ENCODE measurements at regions of chr2 and their contacts with region 1.

Region 1: GRCh38 chr2:219029829-219030165 is 11.5 kb downstream of the CFAP65 start:
- DNase-seq: peak; percentile 87
- H3K4me3 ChIP-seq: no peak overlapping the region
- H3K27ac ChIP-seq: no peak overlapping the region
- H3K4me1 ChIP-seq: no peaks in the 10 kb centered on the region
- H3K27me3 ChIP-seq: peaks cover 15% of the 10 kb centered on the region
- CTCF ChIP-seq: peak; percentile 88 to 98 (median 95)
- EP300 ChIP-seq: no peak
- POLR2A ChIP-seq: no peak

Region 2: DNA sequence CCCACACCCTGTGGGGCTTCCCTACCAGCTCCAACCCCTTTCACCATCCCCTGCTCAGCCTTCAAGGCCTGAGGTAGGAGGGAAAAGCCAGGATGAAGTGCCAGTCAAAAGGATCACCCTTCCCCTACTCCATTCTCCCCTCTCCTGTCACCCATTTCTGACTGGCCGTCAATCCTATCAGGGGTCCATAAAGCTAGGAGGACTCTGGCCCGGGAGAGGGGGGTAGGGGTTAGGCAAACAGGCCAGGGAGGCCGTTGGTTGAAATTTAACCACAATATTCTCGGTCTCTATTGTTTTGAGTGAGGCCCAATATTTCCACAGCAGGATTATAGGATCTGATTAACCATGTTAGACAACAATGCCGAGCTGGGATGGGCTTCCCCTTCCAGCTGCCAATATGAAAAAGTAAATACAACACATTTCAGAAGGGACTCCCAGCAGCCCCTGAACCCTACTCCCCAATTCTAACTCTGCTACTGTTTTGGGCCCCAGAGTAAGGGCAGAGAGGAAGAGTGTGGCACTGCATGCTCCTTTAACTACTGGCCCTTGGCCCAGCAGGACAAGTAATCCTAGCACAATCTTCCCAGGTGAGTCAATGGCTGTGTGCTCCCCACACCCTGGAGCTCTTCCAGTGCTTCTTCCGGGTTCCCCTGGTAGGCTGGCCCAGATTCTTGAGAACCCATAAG is 41.5 kb after region 1 on chr2:
- in situ Hi-C with region 1: no loop called
- intact Hi-C with region 1: no loop called
- DNase-seq: peak; percentile 63
- H3K4me3 ChIP-seq: no peak overlapping the region
- H3K27ac ChIP-seq: peak overlapping the region; percentile 64 to 78 (median 70)
- H3K4me1 ChIP-seq: peaks cover 4 to 33% (median 18%) of the 10 kb centered on the region in 4 donors
- H3K27me3 ChIP-seq: no peaks in the 10 kb centered on the region
- CTCF ChIP-seq: no peak
- EP300 ChIP-seq: no peak
- POLR2A ChIP-seq: no peak

Region 3: GRCh38 chr2:219155054-219155644 is 125.4 kb after region 1 on chr2:
- in situ Hi-C with region 1: loop called in 1 of 4 experiments (anchors 10 kb)
- intact Hi-C with region 1: no loop called
- DNase-seq: peak; percentile 25
- H3K4me3 ChIP-seq: no peak overlapping the region
- H3K27ac ChIP-seq: no peak overlapping the region
- H3K4me1 ChIP-seq: peaks cover 4 to 6% (median 4%) of the 10 kb centered on the region in 4 donors
- H3K27me3 ChIP-seq: no peaks in the 10 kb centered on the region
- CTCF ChIP-seq: peak; percentile 56 to 88 (median 64)
- EP300 ChIP-seq: no peak
- POLR2A ChIP-seq: no peak

Region 4: DNA sequence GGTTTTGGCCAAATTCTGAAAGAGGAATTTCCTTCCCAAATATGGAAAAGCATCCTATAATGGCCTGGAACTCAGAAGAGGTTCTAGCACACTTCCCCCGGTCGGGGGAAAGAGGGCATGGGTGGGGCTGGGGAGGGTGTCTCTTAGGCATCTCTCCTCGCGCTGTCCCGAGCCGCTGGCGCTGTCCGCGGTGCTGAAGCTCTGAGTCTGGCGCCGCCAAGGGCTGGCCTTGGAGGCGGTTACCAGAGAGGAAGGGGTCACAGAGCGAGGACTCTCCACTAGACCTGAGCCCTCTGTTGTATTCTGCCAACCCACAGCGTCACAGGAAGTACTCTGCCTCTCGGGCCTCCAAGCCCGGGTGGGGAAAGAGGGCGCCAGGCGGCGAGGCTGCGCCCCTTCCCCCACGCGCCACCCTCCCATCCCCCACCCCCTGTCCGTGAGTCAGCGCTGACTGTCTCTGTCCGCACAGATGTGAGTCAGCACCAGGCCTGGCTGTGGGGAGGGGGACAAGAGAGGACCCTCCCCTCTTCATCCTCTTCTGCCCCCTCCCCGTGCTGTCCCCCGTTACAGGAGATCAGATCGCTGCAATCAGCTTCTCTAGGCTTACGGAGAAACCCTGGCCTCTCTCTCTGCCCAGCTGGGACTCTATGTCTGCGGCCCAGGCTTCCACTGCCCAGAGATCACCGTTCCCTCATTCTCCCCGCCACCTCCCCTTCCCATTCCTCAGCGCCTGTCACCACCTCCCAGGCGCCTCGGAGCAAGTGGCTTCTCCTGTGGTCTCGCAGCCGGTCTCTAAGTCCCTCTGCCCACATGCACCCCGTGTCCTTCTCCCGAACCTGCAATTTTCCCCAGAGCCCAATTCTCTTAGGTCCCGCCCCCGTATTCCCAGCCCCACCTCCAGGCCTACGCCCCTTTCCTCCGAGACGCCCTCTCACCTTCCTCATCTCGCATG is 278.6 kb after region 1 on chr2:
- in situ Hi-C with region 1: loop called in 2 of 4 experiments (anchors 25 kb)
- intact Hi-C with region 1: no loop called
- DNase-seq: peak; percentile 53
- H3K4me3 ChIP-seq: no peak overlapping the region
- H3K27ac ChIP-seq: no peak overlapping the region
- H3K4me1 ChIP-seq: peaks cover 0 to 6% (median 0%) of the 10 kb centered on the region in 4 donors
- H3K27me3 ChIP-seq: peaks cover 71% of the 10 kb centered on the region
- CTCF ChIP-seq: no peak
- EP300 ChIP-seq: no peak
- POLR2A ChIP-seq: no peak

Region 5: DNA sequence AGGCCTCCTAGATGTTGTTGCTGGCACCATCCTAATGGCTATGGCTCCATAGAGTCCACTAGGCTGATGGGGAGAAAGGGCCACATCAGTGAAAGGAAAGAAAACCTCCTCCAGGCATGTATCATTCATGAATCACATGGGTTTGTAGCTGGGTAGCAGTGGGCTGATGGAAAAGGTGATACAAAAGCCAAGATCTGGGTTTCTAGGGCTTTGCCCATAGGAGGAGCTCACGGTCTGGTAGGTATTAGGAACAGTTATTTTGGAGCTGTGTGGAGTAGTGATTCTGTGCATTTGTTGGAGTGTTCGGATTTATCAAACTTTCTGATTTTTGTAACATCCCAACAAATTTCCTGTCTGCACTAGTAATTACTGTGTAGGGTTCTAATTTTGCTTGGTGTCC is 856.8 kb after region 1 on chr2:
- in situ Hi-C with region 1: no loop called
- intact Hi-C with region 1: no loop called
- DNase-seq: no peak
- H3K4me3 ChIP-seq: no peak overlapping the region
- H3K27ac ChIP-seq: no peak overlapping the region
- H3K4me1 ChIP-seq: no peaks in the 10 kb centered on the region
- H3K27me3 ChIP-seq: no peaks in the 10 kb centered on the region
- CTCF ChIP-seq: no peak
- EP300 ChIP-seq: no peak
- POLR2A ChIP-seq: no peak

Measured in transverse colon (tissue), 4 donors.